ENCODE measurements at regions of chr19 and their contacts with region 1.

Region 1: DNA sequence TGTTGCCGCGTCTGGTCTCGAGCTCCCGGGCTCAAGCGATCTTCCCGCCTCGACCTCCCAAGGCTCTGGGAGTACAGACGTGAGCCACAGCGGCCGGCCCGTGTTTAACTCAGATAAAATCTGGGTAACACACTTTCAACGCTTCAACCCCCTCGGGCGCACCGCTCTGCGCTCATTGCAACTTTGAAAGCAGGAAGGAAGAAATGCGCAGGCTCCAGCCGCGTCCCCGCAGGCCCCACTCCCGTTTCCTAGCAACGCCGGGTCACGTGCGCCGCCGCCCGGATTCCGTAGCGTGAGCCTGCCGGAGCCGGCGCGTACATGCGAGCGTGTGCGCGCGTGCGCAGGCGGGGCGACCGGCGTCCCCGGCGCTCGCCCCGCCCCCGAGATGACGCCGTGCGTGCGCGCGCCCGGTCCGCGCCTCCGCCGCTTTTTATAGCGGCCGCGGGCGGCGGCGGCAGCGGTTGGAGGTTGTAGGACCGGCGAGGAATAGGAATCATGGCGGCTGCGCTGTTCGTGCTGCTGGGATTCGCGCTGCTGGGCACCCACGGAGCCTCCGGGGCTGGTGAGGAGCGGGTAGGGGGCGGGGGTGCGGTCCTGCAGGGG is at the start of gene BSG:
- DNase-seq: peak; percentile 97
- ATAC-seq: peak; percentile 49 to 58
- H3K4me3 ChIP-seq: peak within 1 kb of the TSS; percentile 85 to 100 (median 96)
- H3K27ac ChIP-seq: peak within 1 kb of the TSS; percentile 97 to 100 (median 99)
- H3K4me1 ChIP-seq: peaks cover 39 to 50% of the 10 kb centered on the region in 2 donors
- H3K27me3 ChIP-seq: peaks cover 4 to 8% (median 5%) of the 10 kb centered on the region in 3 donors
- CTCF ChIP-seq: peak in 1 of 5 experiments; percentile 26
- POLR2A ChIP-seq: peak; percentile 99
- total RNA-seq, gene BSG: 305 to 380 (median 364) TPM

Region 2: DNA sequence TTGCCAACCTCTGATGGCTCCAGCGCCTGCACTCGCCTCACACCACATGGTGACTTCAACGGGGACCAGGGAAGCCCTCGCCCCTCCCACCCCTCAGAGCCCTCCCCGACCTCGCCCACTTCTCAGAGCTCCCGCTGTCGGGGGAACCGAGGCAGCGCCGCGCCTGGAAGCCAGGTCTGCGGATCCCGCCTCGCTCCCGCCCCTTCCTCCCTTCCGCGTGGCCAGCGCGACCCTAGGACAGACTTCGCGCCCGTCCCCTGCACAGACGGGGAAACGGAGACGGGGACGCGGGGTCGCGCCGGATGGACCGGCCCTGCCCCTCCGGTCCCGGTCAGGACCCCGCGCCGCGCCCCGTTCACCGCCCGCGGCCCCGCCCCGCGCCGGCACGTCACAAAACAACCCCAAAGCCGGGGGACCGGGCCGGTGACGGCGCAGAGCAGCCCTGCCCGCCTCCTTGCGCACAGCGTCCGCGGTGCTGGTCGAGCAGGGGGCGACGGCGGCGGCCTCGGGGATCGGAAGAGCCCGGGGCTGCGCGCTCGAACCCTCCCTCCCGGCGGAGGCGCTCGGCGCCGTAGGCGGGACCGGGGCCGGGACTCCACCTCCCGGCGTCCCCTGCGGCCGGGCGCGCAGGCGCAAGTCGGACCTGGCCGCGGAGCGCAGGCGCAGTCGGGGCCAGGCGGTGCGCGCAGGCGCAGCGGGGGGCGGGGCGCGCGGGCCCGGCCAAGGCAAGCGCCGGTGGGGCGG is 41.1 kb before region 1 on chr19:
- in situ Hi-C with region 1: no loop called
- intact Hi-C with region 1: loop called (anchors 1 kb)
- DNase-seq: peak; percentile 47 to 76
- ATAC-seq: peak; percentile 75
- H3K4me3 ChIP-seq: peak overlapping the region; percentile 53 to 100 (median 91)
- H3K27ac ChIP-seq: peak overlapping the region; percentile 97 to 99 (median 98)
- H3K4me1 ChIP-seq: peaks cover 31 to 32% of the 10 kb centered on the region in 2 donors
- H3K27me3 ChIP-seq: peaks cover 7 to 11% (median 8%) of the 10 kb centered on the region in 3 donors
- CTCF ChIP-seq: peak in 2 of 5 experiments; percentile 3 to 31
- POLR2A ChIP-seq: no peak

Region 3: GRCh38 chr19:639253-640160 is 67.3 kb after region 1 on chr19 and contains the start of gene FGF22:
- in situ Hi-C with region 1: no loop called
- intact Hi-C with region 1: loop called (anchors 1 kb)
- DNase-seq: peak; percentile 89 to 91
- ATAC-seq: peak; percentile 94 to 95
- H3K4me3 ChIP-seq: peak within 1 kb of the TSS; percentile 51 to 66 (median 60)
- H3K27ac ChIP-seq: peak within 1 kb of the TSS; percentile 14 to 61 (median 42)
- H3K4me1 ChIP-seq: peaks cover 0 to 10% of the 10 kb centered on the region in 2 donors
- H3K27me3 ChIP-seq: no peaks in the 10 kb centered on the region
- CTCF ChIP-seq: peak in 1 of 5 experiments; percentile 17
- POLR2A ChIP-seq: peak; percentile 15 to 34
- total RNA-seq, gene FGF22: not detected

Region 4: DNA sequence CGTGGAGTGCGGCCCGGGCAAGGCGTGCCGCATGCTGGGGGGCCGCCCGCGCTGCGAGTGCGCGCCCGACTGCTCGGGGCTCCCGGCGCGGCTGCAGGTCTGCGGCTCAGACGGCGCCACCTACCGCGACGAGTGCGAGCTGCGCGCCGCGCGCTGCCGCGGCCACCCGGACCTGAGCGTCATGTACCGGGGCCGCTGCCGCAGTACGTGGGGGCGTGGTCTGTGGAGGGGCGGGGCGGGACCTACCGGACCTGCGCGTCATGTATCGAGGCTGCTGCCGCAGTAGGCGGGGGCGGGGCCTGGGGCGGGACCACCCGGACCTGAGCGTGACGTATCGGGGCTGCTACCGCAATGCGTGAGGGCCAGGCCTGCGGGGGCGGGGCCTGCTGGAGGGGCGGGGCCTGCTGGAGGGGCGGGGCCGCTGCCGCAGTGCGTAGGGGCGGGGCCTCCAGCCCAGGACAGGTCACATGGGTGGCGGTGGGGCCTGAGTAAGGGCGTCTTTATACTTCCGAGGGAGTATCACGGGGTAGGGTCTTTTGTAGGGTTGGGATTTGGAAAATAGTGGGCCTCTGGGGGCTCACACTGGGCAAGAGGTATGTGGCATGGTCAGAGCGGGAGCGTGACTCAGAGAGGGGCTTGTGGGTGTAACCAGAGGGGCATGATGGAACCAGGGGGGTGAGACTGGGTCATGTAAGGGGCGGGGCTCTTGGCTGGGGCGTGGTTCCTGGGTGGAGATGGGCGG is 108.2 kb after region 1 on chr19:
- in situ Hi-C with region 1: no loop called
- intact Hi-C with region 1: loop called (anchors 2 kb)
- DNase-seq: peak; percentile 99 to 100
- ATAC-seq: peak; percentile 84 to 87
- H3K4me3 ChIP-seq: peak overlapping the region; percentile 56 to 89 (median 66)
- H3K27ac ChIP-seq: peak overlapping the region; percentile 77 to 89 (median 86)
- H3K4me1 ChIP-seq: peaks cover 0 to 28% of the 10 kb centered on the region in 2 donors
- H3K27me3 ChIP-seq: peaks cover 7 to 12% (median 9%) of the 10 kb centered on the region in 3 donors
- CTCF ChIP-seq: peak in 3 of 5 experiments; percentile 61 to 66 (median 65)
- POLR2A ChIP-seq: peak; percentile 55 to 78